ENCODE measurements at regions of chr20 and their contacts with region 1.

Region 1: GRCh38 chr20:51675928-51676327 is 92.3 kb downstream of the ATP9A start:
- DNase-seq: no peak
- ATAC-seq: no peak
- H3K4me3 ChIP-seq: no peak overlapping the region
- H3K27ac ChIP-seq: no peak overlapping the region
- H3K4me1 ChIP-seq: no peaks in the 10 kb centered on the region
- H3K27me3 ChIP-seq: no peaks in the 10 kb centered on the region
- CTCF ChIP-seq: no peak

Region 2: DNA sequence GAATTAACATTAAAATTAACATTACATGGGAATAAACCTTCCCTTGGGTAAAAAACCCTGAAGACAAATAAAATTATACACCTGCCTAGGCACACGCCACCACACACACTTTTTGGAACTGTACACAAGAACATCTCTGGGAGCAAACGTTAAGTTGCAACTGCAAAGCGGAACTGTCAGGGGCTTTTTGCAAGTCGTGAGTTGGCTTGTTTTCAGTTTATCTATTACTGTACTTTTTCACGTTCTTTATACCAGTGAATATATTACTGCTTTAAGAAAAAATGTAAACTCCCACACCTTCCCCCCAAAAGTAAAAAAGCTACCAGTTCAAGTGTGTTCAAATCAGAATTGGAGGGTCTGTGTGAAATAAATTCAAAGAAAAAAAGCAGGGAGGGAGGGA is 67.9 kb before region 1 on chr20:
- CTCF ChIA-PET with region 1: interaction called, 10 read pairs
- POLR2A ChIA-PET with region 1: no interaction called
- in situ Hi-C with region 1: no loop called
- intact Hi-C with region 1: no loop called
- DNase-seq: no peak
- ATAC-seq: no peak
- H3K4me3 ChIP-seq: no peak overlapping the region
- H3K27ac ChIP-seq: no peak overlapping the region
- H3K4me1 ChIP-seq: no peaks in the 10 kb centered on the region
- H3K27me3 ChIP-seq: no peaks in the 10 kb centered on the region
- CTCF ChIP-seq: no peak

Region 3: GRCh38 chr20:52631469-52631868 is 955.5 kb after region 1 on chr20:
- CTCF ChIA-PET with region 1: no interaction called
- POLR2A ChIA-PET with region 1: no interaction called
- in situ Hi-C with region 1: no loop called
- intact Hi-C with region 1: no loop called
- DNase-seq: no peak
- ATAC-seq: no peak
- H3K4me3 ChIP-seq: no peak overlapping the region
- H3K27ac ChIP-seq: no peak overlapping the region
- H3K4me1 ChIP-seq: no peaks in the 10 kb centered on the region
- H3K27me3 ChIP-seq: no peaks in the 10 kb centered on the region
- CTCF ChIP-seq: no peak